ENCODE measurements at regions of chr2 and their contacts with region 1.

Region 1: GRCh38 chr2:219388127-219388844 is 574 bp upstream of the DNPEP start:
- DNase-seq: peak; percentile 99
- ATAC-seq: peak; percentile 77
- H3K4me3 ChIP-seq: peak overlapping the region in 4 of 5 experiments; percentile 23 to 50 (median 45)
- H3K4me3 Mint-ChIP-seq: peak overlapping the region; percentile 95
- H3K27ac ChIP-seq: peak overlapping the region; percentile 62 to 85
- H3K27ac Mint-ChIP-seq: peak overlapping the region; percentile 93
- H3K4me1 ChIP-seq: peaks cover 15 to 18% of the 10 kb centered on the region in 2 donors
- H3K4me1 Mint-ChIP-seq: peaks cover 13% of the 10 kb centered on the region
- H3K27me3 ChIP-seq: peaks cover 0 to 3% (median 0%) of the 10 kb centered on the region in 4 experiments
- H3K27me3 Mint-ChIP-seq: peaks cover 5% of the 10 kb centered on the region
- CTCF ChIP-seq: peak; percentile 70

Region 2: DNA sequence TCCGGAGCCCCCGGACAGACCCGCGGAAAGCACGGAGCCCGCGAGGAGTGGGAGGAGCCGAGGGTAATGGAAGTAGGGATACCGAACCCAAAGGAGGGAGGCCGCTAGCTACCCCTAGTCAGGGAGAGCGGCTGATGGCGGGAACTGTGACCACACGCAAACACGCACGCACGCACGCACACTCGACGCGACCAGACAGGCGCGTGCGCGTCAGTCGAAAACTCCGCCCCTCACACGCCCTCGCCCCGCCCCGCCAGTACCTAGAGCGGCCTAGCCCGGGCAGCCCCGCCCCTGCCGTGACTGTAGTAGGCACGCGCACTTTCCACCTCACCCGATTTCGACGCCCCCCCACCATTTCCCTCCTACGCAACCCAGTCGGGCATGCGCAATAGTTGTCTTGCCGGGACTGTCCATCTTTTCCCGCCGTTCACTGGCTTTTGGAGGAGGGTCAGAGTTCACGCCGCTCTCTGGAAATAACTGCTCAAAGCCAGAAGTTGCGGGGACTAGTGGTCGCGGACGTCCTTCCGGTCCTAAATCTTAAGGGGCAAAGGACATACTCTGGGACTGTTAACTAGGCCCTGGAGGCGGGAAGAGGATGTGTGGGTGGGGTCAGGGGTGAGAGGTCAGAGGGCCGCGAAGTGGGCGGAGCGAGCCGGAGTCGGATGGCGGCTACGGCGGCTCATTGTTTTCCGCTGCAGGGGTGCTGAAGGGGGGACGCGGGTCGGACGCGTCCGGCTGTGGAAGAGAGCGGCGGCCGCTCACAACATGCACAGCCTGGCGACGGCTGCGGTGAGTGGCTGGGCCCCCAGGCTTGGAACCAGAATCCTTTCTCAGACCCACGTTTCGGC is 819.9 kb before region 1 on chr2 and contains the starts of genes CNOT9 and USP37:
- CTCF ChIA-PET with region 1: no interaction called
- POLR2A ChIA-PET with region 1: no interaction called
- intact Hi-C with region 1: loop called (anchors 1 kb)
- DNase-seq: peak; percentile 100
- ATAC-seq: peak; percentile 92
- H3K4me3 ChIP-seq: peak within 1 kb of the TSS; percentile 65 to 91 (median 84)
- H3K4me3 Mint-ChIP-seq: peak within 1 kb of the TSS; percentile 96
- H3K27ac ChIP-seq: peak within 1 kb of the TSS; percentile 93 to 95
- H3K27ac Mint-ChIP-seq: peak within 1 kb of the TSS; percentile 100
- H3K4me1 ChIP-seq: peaks cover 29 to 31% of the 10 kb centered on the region in 2 donors
- H3K4me1 Mint-ChIP-seq: peaks cover 56% of the 10 kb centered on the region
- H3K27me3 ChIP-seq: no peaks in the 10 kb centered on the region
- H3K27me3 Mint-ChIP-seq: no peaks in the 10 kb centered on the region
- CTCF ChIP-seq: no peak
- total RNA-seq, gene CNOT9: 54.5 and 66.9 TPM in 2 replicates
- total RNA-seq, gene USP37: 29.0 and 32.4 TPM in 2 replicates

Region 3: GRCh38 chr2:219160186-219161017 is 227.9 kb before region 1 on chr2 and contains the start of gene NHEJ1:
- CTCF ChIA-PET with region 1: interaction called, 4 read pairs
- POLR2A ChIA-PET with region 1: no interaction called
- intact Hi-C with region 1: loop called (anchors 1 kb)
- DNase-seq: peak; percentile 98
- ATAC-seq: peak; percentile 86
- H3K4me3 ChIP-seq: peak within 1 kb of the TSS; percentile 39 to 84 (median 72)
- H3K4me3 Mint-ChIP-seq: peak within 1 kb of the TSS; percentile 98
- H3K27ac ChIP-seq: peak within 1 kb of the TSS; percentile 56 to 63
- H3K27ac Mint-ChIP-seq: peak within 1 kb of the TSS; percentile 97
- H3K4me1 ChIP-seq: peaks cover 9 to 13% of the 10 kb centered on the region in 2 donors
- H3K4me1 Mint-ChIP-seq: peaks cover 21% of the 10 kb centered on the region
- H3K27me3 ChIP-seq: no peaks in the 10 kb centered on the region
- H3K27me3 Mint-ChIP-seq: no peaks in the 10 kb centered on the region
- CTCF ChIP-seq: peak; percentile 97
- total RNA-seq, gene NHEJ1: 20.3 and 25.0 TPM in 2 replicates

Region 4: DNA sequence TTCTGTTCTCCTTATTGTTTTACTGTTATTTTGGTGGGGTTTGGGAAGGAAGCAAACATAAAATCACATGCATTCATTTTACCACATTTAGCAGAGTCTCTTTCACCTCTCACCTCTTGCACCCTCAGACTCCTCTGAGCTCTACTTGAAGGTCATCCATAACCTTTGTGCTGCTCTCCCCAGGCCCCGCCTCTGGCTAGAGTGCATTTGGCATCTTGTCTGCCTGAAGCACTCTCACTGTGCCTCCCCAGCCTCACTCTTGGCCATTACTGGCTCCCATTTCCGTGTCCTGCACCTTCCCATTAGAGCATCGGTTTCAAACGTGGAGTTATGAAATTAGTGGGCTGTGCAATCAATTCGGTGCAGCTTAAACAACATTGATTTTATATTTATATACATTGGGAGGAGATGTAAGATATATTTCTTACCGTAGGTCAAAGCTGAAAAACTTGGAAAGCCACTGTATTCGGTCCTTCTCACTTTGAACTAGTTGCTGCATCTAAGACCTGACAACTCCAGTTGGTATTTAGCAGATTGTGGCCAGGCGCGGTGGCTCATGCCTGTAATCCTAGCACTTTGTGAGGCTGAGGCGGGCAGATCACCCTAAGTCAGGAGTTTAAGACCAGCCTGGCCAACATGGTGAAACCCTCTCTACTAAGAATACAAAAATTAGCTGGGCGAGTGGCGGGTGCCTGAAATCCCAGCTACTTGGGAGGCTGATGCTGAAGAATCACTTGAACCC is 188.6 kb before region 1 on chr2:
- CTCF ChIA-PET with region 1: no interaction called
- POLR2A ChIA-PET with region 1: no interaction called
- intact Hi-C with region 1: no loop called
- DNase-seq: no peak
- ATAC-seq: no peak
- H3K4me3 ChIP-seq: no peak overlapping the region
- H3K4me3 Mint-ChIP-seq: no peak overlapping the region
- H3K27ac ChIP-seq: no peak overlapping the region
- H3K27ac Mint-ChIP-seq: peak overlapping the region; percentile 21
- H3K4me1 ChIP-seq: no peaks in the 10 kb centered on the region
- H3K4me1 Mint-ChIP-seq: no peaks in the 10 kb centered on the region
- H3K27me3 ChIP-seq: peaks cover 0 to 3% (median 0%) of the 10 kb centered on the region in 4 experiments
- H3K27me3 Mint-ChIP-seq: peaks cover 14% of the 10 kb centered on the region
- CTCF ChIP-seq: no peak

Region 5: GRCh38 chr2:219253753-219254590 is 134.3 kb before region 1 on chr2 and contains the start of gene TUBA4A:
- CTCF ChIA-PET with region 1: interaction called, 3 read pairs
- POLR2A ChIA-PET with region 1: interaction called, 3 read pairs
- intact Hi-C with region 1: loop called (anchors 2 kb)
- DNase-seq: peak; percentile 93
- ATAC-seq: peak; percentile 72
- H3K4me3 ChIP-seq: peak within 1 kb of the TSS; percentile 83 to 97 (median 90)
- H3K4me3 Mint-ChIP-seq: peak within 1 kb of the TSS; percentile 87
- H3K27ac ChIP-seq: peak within 1 kb of the TSS; percentile 93 to 94
- H3K27ac Mint-ChIP-seq: peak within 1 kb of the TSS; percentile 96
- H3K4me1 ChIP-seq: peaks cover 34 to 44% of the 10 kb centered on the region in 2 donors
- H3K4me1 Mint-ChIP-seq: peaks cover 49% of the 10 kb centered on the region
- H3K27me3 ChIP-seq: no peaks in the 10 kb centered on the region
- H3K27me3 Mint-ChIP-seq: no peaks in the 10 kb centered on the region
- CTCF ChIP-seq: no peak
- total RNA-seq, gene TUBA4A: 196 and 213 TPM in 2 replicates

Region 6: GRCh38 chr2:219362072-219362471 is 26.2 kb before region 1 on chr2:
- CTCF ChIA-PET with region 1: interaction called, 4 read pairs
- POLR2A ChIA-PET with region 1: interaction called, 11 read pairs
- intact Hi-C with region 1: no loop called
- DNase-seq: no peak
- ATAC-seq: no peak
- H3K4me3 ChIP-seq: no peak overlapping the region
- H3K4me3 Mint-ChIP-seq: no peak overlapping the region
- H3K27ac ChIP-seq: no peak overlapping the region
- H3K27ac Mint-ChIP-seq: no peak overlapping the region
- H3K4me1 ChIP-seq: peaks cover 0 to 7% of the 10 kb centered on the region in 2 donors
- H3K4me1 Mint-ChIP-seq: peaks cover 2% of the 10 kb centered on the region
- H3K27me3 ChIP-seq: peaks cover 0 to 24% (median 2%) of the 10 kb centered on the region in 4 experiments
- H3K27me3 Mint-ChIP-seq: peaks cover 18% of the 10 kb centered on the region
- CTCF ChIP-seq: no peak

Region 7: DNA sequence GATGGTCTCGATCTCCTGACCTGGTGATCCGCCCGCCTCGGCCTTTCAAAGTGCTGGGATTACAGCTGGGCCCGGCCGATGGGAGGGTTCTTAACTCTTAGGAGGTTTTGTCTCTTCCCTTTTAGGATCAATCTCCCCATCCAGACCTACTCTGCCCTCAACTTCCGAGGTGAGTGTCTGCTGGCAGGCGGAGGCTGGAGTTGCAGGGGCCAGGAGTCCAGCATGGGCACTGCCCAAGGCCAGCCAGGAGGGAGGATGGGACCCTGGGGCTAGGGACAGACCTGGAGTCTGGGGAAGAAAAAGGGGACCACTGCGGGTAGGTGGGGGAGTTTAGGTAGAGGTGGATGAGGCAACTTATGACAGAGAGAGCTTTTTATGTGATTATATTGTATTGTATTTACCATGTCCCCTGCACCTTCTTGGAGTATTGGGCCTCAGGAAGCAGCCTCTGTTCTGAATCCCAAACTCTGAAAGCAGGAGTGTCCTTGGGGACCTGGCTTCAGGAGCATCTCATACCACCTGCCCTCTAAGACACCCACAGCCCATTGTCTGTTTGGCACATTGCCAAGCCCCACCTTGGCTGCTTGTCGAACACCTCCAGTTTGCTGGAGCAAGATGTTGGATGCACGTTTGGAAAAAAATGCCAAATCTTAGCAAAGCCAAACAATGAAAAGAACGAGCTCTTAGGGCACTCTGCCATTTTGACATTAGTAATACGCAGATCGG is 35.5 kb after region 1 on chr2:
- CTCF ChIA-PET with region 1: no interaction called
- POLR2A ChIA-PET with region 1: no interaction called
- intact Hi-C with region 1: no loop called
- DNase-seq: no peak
- ATAC-seq: no peak
- H3K4me3 ChIP-seq: no peak overlapping the region
- H3K4me3 Mint-ChIP-seq: no peak overlapping the region
- H3K27ac ChIP-seq: no peak overlapping the region
- H3K27ac Mint-ChIP-seq: no peak overlapping the region
- H3K4me1 ChIP-seq: no peaks in the 10 kb centered on the region
- H3K4me1 Mint-ChIP-seq: peaks cover 1% of the 10 kb centered on the region
- H3K27me3 ChIP-seq: peaks cover 0 to 26% (median 2%) of the 10 kb centered on the region in 4 experiments
- H3K27me3 Mint-ChIP-seq: peaks cover 45% of the 10 kb centered on the region
- CTCF ChIP-seq: no peak

Region 8: GRCh38 chr2:219530048-219530963 is 142.0 kb after region 1 on chr2:
- CTCF ChIA-PET with region 1: interaction called, 12 read pairs
- POLR2A ChIA-PET with region 1: no interaction called
- intact Hi-C with region 1: no loop called
- DNase-seq: peak; percentile 84
- ATAC-seq: peak; percentile 91
- H3K4me3 ChIP-seq: no peak overlapping the region
- H3K4me3 Mint-ChIP-seq: no peak overlapping the region
- H3K27ac ChIP-seq: no peak overlapping the region
- H3K27ac Mint-ChIP-seq: no peak overlapping the region
- H3K4me1 ChIP-seq: peaks cover 4 to 5% of the 10 kb centered on the region in 2 donors
- H3K4me1 Mint-ChIP-seq: peaks cover 3% of the 10 kb centered on the region
- H3K27me3 ChIP-seq: peaks cover 0 to 53% (median 18%) of the 10 kb centered on the region in 4 experiments
- H3K27me3 Mint-ChIP-seq: peaks cover 64% of the 10 kb centered on the region
- CTCF ChIP-seq: peak; percentile 98

Region 9: GRCh38 chr2:219642465-219643080 is 254.3 kb after region 1 on chr2:
- CTCF ChIA-PET with region 1: interaction called, 3 read pairs
- POLR2A ChIA-PET with region 1: no interaction called
- intact Hi-C with region 1: loop called (anchors 1 kb)
- DNase-seq: peak; percentile 96
- ATAC-seq: peak; percentile 100
- H3K4me3 ChIP-seq: peak overlapping the region in 4 of 5 experiments; percentile 10 to 40 (median 27)
- H3K4me3 Mint-ChIP-seq: peak overlapping the region; percentile 75
- H3K27ac ChIP-seq: no peak overlapping the region
- H3K27ac Mint-ChIP-seq: peak overlapping the region; percentile 50
- H3K4me1 ChIP-seq: peaks cover 8 to 17% of the 10 kb centered on the region in 2 donors
- H3K4me1 Mint-ChIP-seq: peaks cover 15% of the 10 kb centered on the region
- H3K27me3 ChIP-seq: peaks cover 0 to 37% (median 4%) of the 10 kb centered on the region in 4 experiments
- H3K27me3 Mint-ChIP-seq: peaks cover 31% of the 10 kb centered on the region
- CTCF ChIP-seq: peak; percentile 99

Measured in B cell (primary cell).